Activated CD4-positive, alpha-beta T cell treated with anti-CD3 and anti-CD28 coated beads for 36 hours (primary cell): ENCODE measurements at regions of chr15 and their contacts with region 1.

Region 1: DNA sequence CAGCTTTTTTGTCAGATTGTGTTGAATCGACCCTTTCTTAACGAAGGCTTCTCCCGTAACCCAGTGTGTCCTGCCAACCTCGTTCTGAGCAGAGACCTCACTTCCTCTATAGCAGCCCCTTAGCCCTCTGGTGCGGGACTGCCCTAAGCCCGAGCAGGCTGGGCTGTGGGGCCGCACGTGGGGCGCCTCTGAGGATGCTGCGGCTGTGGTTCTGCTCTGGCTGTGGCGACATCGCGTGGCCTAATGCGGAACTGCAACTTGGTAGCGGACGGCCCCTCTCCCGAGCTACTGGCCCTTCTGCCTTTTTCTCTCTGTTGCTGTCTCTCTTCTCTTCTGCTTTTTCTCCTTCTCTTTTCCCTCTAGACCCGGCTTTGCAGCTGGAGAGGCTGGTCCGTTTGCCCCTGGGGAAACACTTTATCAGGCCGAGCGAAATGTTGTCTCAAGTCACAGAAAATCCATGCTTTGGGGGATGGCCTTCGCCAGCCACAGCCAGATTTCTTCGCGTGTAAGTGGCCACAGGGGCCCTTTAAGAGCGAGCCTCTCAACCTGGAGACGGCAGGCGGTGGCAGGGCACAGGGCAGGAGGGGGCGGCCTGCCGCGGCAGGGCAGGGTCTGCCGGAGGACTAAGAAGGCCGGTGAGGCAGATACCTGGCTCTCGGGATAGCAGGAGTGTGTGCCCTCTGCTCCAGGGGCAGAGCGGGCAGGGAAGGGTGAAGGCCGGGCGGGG is 19.4 kb upstream of the KIF23 start:
- DNase-seq: peak; percentile 91
- ATAC-seq: peak; percentile 95
- H3K4me3 Mint-ChIP-seq: no peak overlapping the region
- H3K27ac Mint-ChIP-seq: no peak overlapping the region
- H3K4me1 Mint-ChIP-seq: peaks cover 10% of the 10 kb centered on the region
- H3K27me3 Mint-ChIP-seq: no peaks in the 10 kb centered on the region

Region 2: GRCh38 chr15:69323966-69324365 is 70.8 kb before region 1 on chr15:
- CTCF ChIA-PET with region 1: interaction called, 3 read pairs
- POLR2A ChIA-PET with region 1: no interaction called
- intact Hi-C with region 1: loop called (anchors 5 kb)
- DNase-seq: no peak
- ATAC-seq: no peak
- H3K4me3 Mint-ChIP-seq: no peak overlapping the region
- H3K27ac Mint-ChIP-seq: no peak overlapping the region
- H3K4me1 Mint-ChIP-seq: peaks cover 22% of the 10 kb centered on the region
- H3K27me3 Mint-ChIP-seq: peaks cover 18% of the 10 kb centered on the region